PC-9 (cell line): ENCODE measurements at regions of chr6 and their contacts with region 1.

Region 1: DNA sequence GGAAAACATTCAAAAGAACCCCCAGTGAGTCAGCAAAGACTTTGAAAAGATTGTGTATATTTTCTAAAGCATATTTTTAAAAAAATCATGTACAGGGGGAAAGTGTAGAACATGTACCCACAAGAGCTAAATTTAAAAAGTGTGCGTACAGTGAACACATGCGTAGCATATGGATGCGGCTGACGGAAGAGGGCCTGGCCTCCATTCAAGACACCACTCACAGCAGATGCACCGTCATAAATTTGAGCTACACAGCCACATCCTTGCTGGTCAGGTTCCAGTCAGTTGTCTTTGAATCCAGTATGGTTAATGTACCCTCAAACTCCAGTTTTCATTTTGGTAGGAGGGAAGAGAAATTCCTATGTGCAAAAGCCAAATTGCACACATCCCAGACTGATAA is 54.3 kb upstream of the SPACA1 start:
- DNase-seq: no peak
- H3K4me3 ChIP-seq: no peak overlapping the region
- H3K27ac ChIP-seq: no peak overlapping the region
- H3K4me1 ChIP-seq: no peaks in the 10 kb centered on the region
- H3K27me3 ChIP-seq: peaks cover 5% of the 10 kb centered on the region
- CTCF ChIP-seq: no peak

Region 2: DNA sequence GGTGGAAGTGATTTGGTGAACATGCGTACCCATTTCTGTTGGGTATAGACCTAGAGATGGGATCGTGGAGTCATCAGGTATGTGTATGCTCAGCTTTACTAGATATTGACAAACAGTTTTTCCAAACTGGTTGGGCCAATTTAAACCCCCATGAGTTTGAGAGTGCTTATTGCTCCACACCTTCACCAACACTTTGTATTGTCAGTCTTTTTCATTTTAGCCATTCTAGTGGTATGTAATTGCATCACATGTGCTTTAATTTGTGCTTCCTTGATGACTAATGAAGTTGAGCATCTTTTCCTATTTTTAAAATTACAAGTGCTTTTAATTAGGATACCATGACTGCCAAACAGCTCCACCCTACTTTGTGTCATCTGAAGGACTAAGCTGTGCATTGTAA is 132.5 kb before region 1 on chr6:
- CTCF ChIA-PET with region 1: interaction called, 10 read pairs
- POLR2A ChIA-PET with region 1: no interaction called
- intact Hi-C with region 1: no loop called
- DNase-seq: no peak
- H3K4me3 ChIP-seq: no peak overlapping the region
- H3K27ac ChIP-seq: no peak overlapping the region
- H3K4me1 ChIP-seq: no peaks in the 10 kb centered on the region; the same call in none of the 2 replicates
- H3K27me3 ChIP-seq: no peaks in the 10 kb centered on the region
- CTCF ChIP-seq: no peak